ENCODE measurements at regions of chr5 and their contacts with region 1.

Region 1: DNA sequence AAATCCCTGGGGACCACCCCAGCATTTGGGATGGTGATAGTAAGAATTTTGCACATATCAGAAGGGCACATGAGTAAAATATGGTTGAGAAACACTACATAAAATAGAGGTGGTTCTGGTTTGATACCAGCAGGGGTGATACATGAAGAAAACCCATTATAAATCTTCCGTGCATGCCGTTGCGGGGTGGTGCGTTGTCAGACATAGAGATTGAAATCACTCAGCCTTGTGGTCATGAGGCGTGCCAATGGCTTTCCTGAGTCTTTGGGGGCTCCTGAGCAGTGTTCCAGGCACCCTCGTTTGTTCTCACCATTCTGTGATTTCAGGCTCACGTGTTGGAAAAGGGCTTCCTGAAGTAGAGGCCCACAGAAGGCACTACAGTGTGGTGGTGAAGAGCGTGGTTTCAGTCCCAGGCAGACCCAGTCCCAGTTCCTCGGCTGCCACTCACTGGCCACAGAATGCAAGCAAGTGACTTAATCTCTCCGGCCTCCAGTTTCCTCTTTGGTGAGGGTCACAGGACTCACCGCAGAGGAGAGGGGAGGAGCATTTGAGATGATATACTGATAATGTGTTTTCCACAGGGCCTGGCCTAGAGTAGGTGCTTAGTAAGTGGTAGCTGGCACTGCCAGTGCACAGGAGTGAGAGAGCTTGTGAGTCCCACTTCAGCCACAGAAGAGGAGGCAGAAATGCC is 20.5 kb upstream of the GLRX start:
- DNase-seq: peak; percentile 79 to 91 (median 89)
- H3K4me3 ChIP-seq: no peak overlapping the region
- H3K27ac ChIP-seq: peak overlapping the region; percentile 33 to 89 (median 70)
- H3K4me1 ChIP-seq: peaks cover 9 to 22% of the 10 kb centered on the region in 2 donors
- H3K27me3 ChIP-seq: no peaks in the 10 kb centered on the region
- CTCF ChIP-seq: peak in 4 of 6 experiments; percentile 18 to 41 (median 30)
- POLR2A ChIP-seq: peak in 1 of 2 donors; percentile 62

Region 2: DNA sequence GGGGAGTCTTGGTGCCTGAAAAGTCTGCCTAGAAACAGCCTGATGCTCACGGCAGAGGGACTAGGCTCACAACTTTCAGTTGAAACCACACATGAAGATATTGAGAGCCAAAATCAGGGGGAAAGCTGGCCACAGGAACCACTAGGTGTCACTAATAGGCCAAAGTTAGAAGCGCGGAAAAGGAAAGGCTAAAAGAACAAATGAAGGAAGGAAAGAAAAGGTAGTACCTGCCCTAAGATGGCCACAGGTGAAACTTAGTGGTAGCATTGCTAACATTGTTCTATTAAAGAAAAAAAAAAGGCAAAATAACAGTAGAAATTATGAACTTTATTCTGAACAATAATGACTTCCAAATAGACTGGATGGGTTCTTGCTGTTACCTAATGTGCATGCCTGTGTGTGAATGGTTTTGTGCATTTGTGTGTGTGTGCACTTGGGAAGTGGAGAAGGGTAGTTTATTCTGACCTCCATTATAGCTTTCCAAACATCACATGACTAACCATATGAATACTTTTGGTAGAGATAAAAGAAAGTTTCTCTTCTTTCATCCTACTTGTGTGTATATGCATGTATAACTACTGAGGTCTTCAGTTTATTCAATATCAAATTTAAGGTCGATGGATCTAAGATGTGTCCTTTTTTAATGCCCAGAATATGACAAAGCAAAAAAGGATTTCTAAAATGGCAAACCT is 198.5 kb before region 1 on chr5:
- intact Hi-C with region 1: loop called in 1 of 2 experiments (anchors 2 kb)
- DNase-seq: peak; percentile 42 to 81 (median 57)
- H3K4me3 ChIP-seq: no peak overlapping the region
- H3K27ac ChIP-seq: peak overlapping the region in 1 of 5 donors; percentile 15
- H3K4me1 ChIP-seq: peaks cover 9 to 16% of the 10 kb centered on the region in 2 donors
- H3K27me3 ChIP-seq: no peaks in the 10 kb centered on the region
- CTCF ChIP-seq: peak; percentile 48 to 87 (median 72)
- POLR2A ChIP-seq: no peak

Region 3: GRCh38 chr5:95760273-95761191 is 82.5 kb before region 1 on chr5:
- intact Hi-C with region 1: no loop called
- DNase-seq: no peak
- H3K4me3 ChIP-seq: no peak overlapping the region
- H3K27ac ChIP-seq: peak overlapping the region in 4 of 5 donors; percentile 11 to 71 (median 54)
- H3K4me1 ChIP-seq: peaks cover 0 to 41% of the 10 kb centered on the region in 2 donors
- H3K27me3 ChIP-seq: no peaks in the 10 kb centered on the region
- CTCF ChIP-seq: no peak
- POLR2A ChIP-seq: no peak

Region 4: DNA sequence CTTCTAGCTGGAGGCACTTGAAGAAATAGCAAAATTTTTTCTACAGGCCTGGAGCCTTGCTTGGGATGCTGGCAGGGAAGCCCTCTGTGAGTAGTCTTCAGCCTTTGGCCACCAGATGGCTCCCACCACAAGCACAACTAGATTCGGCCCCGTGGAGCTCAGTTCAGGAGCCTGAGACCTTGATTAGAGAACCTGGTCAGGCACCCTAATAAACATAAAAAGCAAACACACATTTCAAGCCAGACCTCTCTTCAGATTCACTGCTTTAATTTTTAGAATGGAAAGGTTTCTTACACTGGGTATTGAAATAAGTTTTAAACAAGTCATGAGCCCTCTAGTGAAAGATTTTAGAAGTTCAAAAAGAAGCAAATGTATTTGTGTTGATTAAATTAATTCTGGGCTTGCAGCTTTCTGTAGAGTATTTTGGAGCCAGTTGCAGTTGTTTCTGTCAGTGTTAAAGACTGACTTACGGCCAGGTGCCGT is 61.9 kb before region 1 on chr5:
- intact Hi-C with region 1: loop called (anchors 2 to 5 kb)
- DNase-seq: peak; percentile 75 to 94 (median 88)
- H3K4me3 ChIP-seq: no peak overlapping the region
- H3K27ac ChIP-seq: peak overlapping the region in 4 of 5 donors; percentile 16 to 72 (median 42)
- H3K4me1 ChIP-seq: peaks cover 12 to 35% of the 10 kb centered on the region in 2 donors
- H3K27me3 ChIP-seq: no peaks in the 10 kb centered on the region
- CTCF ChIP-seq: peak; percentile 70 to 97 (median 90)
- POLR2A ChIP-seq: no peak